AG04450 (cell line): ENCODE measurements at regions of chr1 and their contacts with region 1.

Region 1: DNA sequence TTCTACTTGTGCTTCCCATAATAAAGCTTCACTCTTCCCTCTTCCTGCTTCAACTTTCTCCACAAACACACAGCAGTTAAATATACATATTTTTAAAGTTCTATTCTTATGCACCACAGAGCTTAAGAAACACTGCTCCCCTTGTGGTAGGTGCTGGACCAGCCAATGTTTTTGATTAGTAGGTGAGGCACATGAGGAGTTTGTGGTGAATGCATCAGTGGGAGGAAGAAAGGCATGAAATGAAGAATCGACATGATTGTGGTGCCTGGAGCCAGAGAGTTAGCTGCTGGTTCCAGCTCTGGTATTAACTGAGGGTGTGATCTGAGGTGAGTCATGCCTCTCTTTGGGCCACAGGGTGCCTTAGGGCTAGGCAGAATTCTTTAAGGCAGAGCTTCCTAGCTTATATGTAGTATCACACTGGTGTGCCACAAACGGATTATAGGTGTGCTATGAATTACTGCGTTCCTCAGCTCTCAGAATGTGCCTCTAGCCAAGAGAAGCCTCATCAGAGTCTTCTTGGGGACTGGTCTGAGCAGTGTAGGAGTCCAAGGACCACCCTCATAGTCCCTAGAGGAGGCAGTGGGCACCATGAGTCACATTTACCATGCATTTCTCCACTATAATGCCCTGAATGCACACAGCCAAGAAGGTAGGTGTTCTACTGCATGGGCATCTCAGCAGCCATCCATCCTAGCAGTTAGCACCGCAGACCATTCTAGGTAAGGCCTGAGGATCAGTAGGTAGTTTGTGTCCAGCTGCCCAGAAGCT is 97.4 kb upstream of the SGIP1 start:
- DNase-seq: peak; percentile 41
- H3K4me3 ChIP-seq: no peak overlapping the region
- H3K27ac ChIP-seq: no peak overlapping the region
- H3K27me3 ChIP-seq: no peaks in the 10 kb centered on the region
- CTCF ChIP-seq: peak; percentile 62

Region 2: GRCh38 chr1:66265796-66266195 is 170.8 kb before region 1 on chr1:
- CTCF ChIA-PET with region 1: interaction called, 484 read pairs
- POLR2A ChIA-PET with region 1: no interaction called
- DNase-seq: no peak
- H3K4me3 ChIP-seq: no peak overlapping the region
- H3K27ac ChIP-seq: no peak overlapping the region
- H3K27me3 ChIP-seq: no peaks in the 10 kb centered on the region
- CTCF ChIP-seq: no peak

Region 3: GRCh38 chr1:66418011-66418410 is 18.6 kb before region 1 on chr1:
- CTCF ChIA-PET with region 1: no interaction called
- POLR2A ChIA-PET with region 1: no interaction called
- DNase-seq: no peak
- H3K4me3 ChIP-seq: no peak overlapping the region
- H3K27ac ChIP-seq: no peak overlapping the region
- H3K27me3 ChIP-seq: no peaks in the 10 kb centered on the region
- CTCF ChIP-seq: no peak

Region 4: GRCh38 chr1:66464802-66465201 is 28.2 kb after region 1 on chr1:
- CTCF ChIA-PET with region 1: no interaction called
- POLR2A ChIA-PET with region 1: no interaction called
- DNase-seq: peak; percentile 92
- H3K4me3 ChIP-seq: no peak overlapping the region
- H3K27ac ChIP-seq: peak overlapping the region; percentile 94
- H3K27me3 ChIP-seq: no peaks in the 10 kb centered on the region
- CTCF ChIP-seq: no peak